Activated CD8-positive, alpha-beta memory T cell treated with anti-CD3 and anti-CD28 coated beads, Interleukin-2, amount 10 ng/mL, durations not matched to agents 7 days and 5 days (primary cell): ENCODE measurements at regions of chr2 and their contacts with region 1.

Region 1: GRCh38 chr2:85826990-85827878 is 61.6 kb downstream of the ST3GAL5 start:
- DNase-seq: peak; percentile 89
- ATAC-seq: peak; percentile 98
- H3K4me3 Mint-ChIP-seq: no peak overlapping the region
- H3K27ac Mint-ChIP-seq: peak overlapping the region; percentile 74
- H3K4me1 Mint-ChIP-seq: peaks cover 35% of the 10 kb centered on the region
- H3K27me3 Mint-ChIP-seq: peaks cover 18% of the 10 kb centered on the region

Region 2: GRCh38 chr2:85838181-85838580 is 10.9 kb after region 1 on chr2:
- CTCF ChIA-PET with region 1: interaction called, 13 read pairs
- DNase-seq: no peak
- ATAC-seq: no peak
- H3K4me3 Mint-ChIP-seq: no peak overlapping the region
- H3K27ac Mint-ChIP-seq: no peak overlapping the region
- H3K4me1 Mint-ChIP-seq: peaks cover 35% of the 10 kb centered on the region
- H3K27me3 Mint-ChIP-seq: peaks cover 3% of the 10 kb centered on the region

Region 3: DNA sequence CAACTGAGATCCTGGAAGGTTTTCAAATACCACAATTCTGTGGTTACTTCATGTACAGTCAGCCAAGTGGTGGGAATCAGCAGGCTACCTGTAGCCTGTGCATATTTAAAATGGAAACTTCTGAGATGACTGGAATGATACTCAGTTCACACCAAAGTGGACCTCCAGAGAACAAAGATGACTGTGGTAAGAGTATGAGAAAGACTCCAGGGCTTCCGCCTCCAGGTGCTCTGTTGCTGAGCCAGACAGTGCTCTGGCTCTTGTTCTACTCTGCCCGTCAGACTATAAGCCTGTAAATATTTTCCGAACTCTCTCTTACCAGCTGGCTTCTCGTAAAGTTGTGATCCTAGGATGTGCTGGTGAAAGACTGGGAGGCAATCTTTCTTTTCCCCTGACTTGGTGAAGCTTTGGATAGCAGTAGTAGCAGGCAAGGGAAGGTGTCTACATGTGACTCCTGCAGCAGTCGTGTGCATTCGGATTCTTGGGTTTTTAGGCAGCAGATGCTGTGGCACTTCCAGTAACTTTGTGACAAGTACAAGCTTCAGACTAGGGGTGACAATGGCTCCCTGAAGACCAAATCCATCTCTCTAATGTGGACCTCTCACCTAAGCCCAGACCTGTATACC is 38.4 kb after region 1 on chr2:
- CTCF ChIA-PET with region 1: interaction called, 16 read pairs
- DNase-seq: peak; percentile 56
- ATAC-seq: peak; percentile 63
- H3K4me3 Mint-ChIP-seq: no peak overlapping the region
- H3K27ac Mint-ChIP-seq: peak overlapping the region; percentile 14
- H3K4me1 Mint-ChIP-seq: peaks cover 65% of the 10 kb centered on the region
- H3K27me3 Mint-ChIP-seq: no peaks in the 10 kb centered on the region

Region 4: GRCh38 chr2:85999061-85999831 is 172.0 kb after region 1 on chr2:
- CTCF ChIA-PET with region 1: interaction called, 10 read pairs
- DNase-seq: peak; percentile 85
- ATAC-seq: peak; percentile 92
- H3K4me3 Mint-ChIP-seq: peak overlapping the region; percentile 56
- H3K27ac Mint-ChIP-seq: peak overlapping the region; percentile 95
- H3K4me1 Mint-ChIP-seq: peaks cover 72% of the 10 kb centered on the region
- H3K27me3 Mint-ChIP-seq: no peaks in the 10 kb centered on the region

Region 5: GRCh38 chr2:86079981-86080911 is 253.0 kb after region 1 on chr2:
- CTCF ChIA-PET with region 1: interaction called, 391 read pairs
- DNase-seq: peak; percentile 93
- ATAC-seq: peak; percentile 85
- H3K4me3 Mint-ChIP-seq: no peak overlapping the region
- H3K27ac Mint-ChIP-seq: peak overlapping the region; percentile 88
- H3K4me1 Mint-ChIP-seq: peaks cover 35% of the 10 kb centered on the region
- H3K27me3 Mint-ChIP-seq: no peaks in the 10 kb centered on the region